ENCODE measurements at regions of chr6 and their contacts with region 1.

Region 1: GRCh38 chr6:47780510-47781356 is 1.1 kb upstream of the OPN5 start:
- DNase-seq: peak; percentile 42
- H3K4me3 Mint-ChIP-seq: peak overlapping the region; percentile 9
- H3K27ac Mint-ChIP-seq: peak overlapping the region; percentile 59
- H3K4me1 Mint-ChIP-seq: no peaks in the 10 kb centered on the region
- H3K27me3 Mint-ChIP-seq: no peaks in the 10 kb centered on the region
- CTCF ChIP-seq: peak; percentile 29

Region 2: GRCh38 chr6:47631269-47631772 is 149.4 kb before region 1 on chr6:
- CTCF ChIA-PET with region 1: interaction called, 15 read pairs
- intact Hi-C with region 1: loop called (anchors 1 kb)
- DNase-seq: no peak
- H3K4me3 Mint-ChIP-seq: no peak overlapping the region
- H3K27ac Mint-ChIP-seq: peak overlapping the region; percentile 59
- H3K4me1 Mint-ChIP-seq: peaks cover 36% of the 10 kb centered on the region
- H3K27me3 Mint-ChIP-seq: no peaks in the 10 kb centered on the region
- CTCF ChIP-seq: no peak

Region 3: GRCh38 chr6:47690209-47690608 is 90.5 kb before region 1 on chr6:
- CTCF ChIA-PET with region 1: interaction called, 3 read pairs
- intact Hi-C with region 1: loop called (anchors 5 kb)
- DNase-seq: no peak
- H3K4me3 Mint-ChIP-seq: no peak overlapping the region
- H3K27ac Mint-ChIP-seq: no peak overlapping the region
- H3K4me1 Mint-ChIP-seq: no peaks in the 10 kb centered on the region
- H3K27me3 Mint-ChIP-seq: no peaks in the 10 kb centered on the region
- CTCF ChIP-seq: no peak

Region 4: GRCh38 chr6:47741807-47742206 is 38.9 kb before region 1 on chr6:
- CTCF ChIA-PET with region 1: no interaction called
- intact Hi-C with region 1: loop called (anchors 2 kb)
- DNase-seq: peak; percentile 42
- H3K4me3 Mint-ChIP-seq: no peak overlapping the region
- H3K27ac Mint-ChIP-seq: peak overlapping the region; percentile 38
- H3K4me1 Mint-ChIP-seq: peaks cover 19% of the 10 kb centered on the region
- H3K27me3 Mint-ChIP-seq: no peaks in the 10 kb centered on the region
- CTCF ChIP-seq: no peak